Endothelial cell of umbilical vein (primary cell): ENCODE measurements at regions of chr12 and their contacts with region 1.

Region 1: DNA sequence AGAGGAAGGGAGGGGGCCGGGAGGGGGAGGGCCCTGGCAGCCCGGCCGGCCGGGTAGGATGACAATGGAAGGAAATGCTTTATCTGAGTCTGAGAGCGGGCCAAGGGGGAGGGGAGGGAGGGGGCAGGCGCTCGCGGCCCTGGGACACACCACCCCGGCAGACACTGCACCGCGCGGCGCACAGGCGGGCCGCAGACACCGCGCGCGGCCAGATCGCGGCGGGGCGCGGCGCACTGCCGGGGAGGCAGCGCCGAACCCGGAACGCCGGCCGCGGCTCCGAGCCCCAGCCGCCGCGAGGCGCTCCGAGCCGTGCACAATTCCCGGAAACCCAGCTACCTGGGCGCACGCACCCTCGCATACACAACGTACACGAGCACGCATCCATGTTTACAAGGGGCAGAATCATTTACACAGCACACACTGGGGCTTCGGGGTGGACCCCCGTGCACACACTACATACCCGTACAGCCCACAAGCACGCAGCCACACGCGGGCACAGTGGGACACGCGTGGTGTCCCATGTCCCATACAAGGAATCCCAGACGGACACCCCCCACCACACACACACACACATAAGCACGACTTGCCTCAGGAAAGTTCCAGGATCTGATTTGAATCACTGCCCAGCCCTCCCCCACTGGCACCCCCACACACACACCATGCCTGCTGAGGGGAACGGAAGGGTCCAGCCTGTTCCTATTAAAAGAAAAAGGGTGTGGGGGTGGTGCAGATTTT is at the start of gene HDAC7:
- DNase-seq: peak; percentile 90
- H3K4me3 ChIP-seq: peak within 1 kb of the TSS; percentile 79 to 85 (median 84)
- H3K27ac ChIP-seq: peak within 1 kb of the TSS; percentile 93
- H3K4me1 ChIP-seq: peaks cover 50% of the 10 kb centered on the region
- H3K27me3 ChIP-seq: no peaks in the 10 kb centered on the region
- CTCF ChIP-seq: no peak
- POLR2A ChIP-seq: peak; percentile 88
- total RNA-seq, gene HDAC7: 249 and 252 TPM in 2 replicates

Region 2: GRCh38 chr12:47578836-47579235 is 241.2 kb before region 1 on chr12:
- CTCF ChIA-PET with region 1: no interaction called
- POLR2A ChIA-PET with region 1: no interaction called
- dilution Hi-C with region 1: no loop called
- intact Hi-C with region 1: no loop called
- DNase-seq: no peak
- H3K4me3 ChIP-seq: no peak overlapping the region
- H3K27ac ChIP-seq: no peak overlapping the region
- H3K4me1 ChIP-seq: no peaks in the 10 kb centered on the region
- H3K27me3 ChIP-seq: peaks cover 0 to 1% of the 10 kb centered on the region in 2 experiments
- CTCF ChIP-seq: no peak
- POLR2A ChIP-seq: no peak

Region 3: DNA sequence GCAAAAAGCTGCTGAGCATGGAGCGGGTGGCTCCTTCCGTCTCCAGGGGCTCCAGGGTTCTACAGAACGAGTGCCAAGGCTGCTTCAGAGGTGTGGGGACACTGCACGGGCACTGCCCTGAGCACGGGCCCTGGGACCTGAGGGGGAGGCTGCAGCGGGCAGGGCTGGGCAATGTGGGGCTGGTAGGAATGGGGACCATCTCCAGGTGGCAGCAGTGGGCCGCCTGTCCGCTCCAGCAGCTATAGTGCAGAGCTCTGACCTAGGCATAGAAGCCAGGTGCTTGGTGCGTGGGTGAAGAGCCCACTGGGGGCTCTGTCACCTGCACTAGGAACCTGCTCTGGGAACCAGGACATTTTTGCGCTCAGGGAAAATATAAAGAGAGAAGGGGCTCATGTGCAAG is 22.6 kb before region 1 on chr12:
- CTCF ChIA-PET with region 1: interaction called, 35 read pairs
- POLR2A ChIA-PET with region 1: interaction called, 9 read pairs
- dilution Hi-C with region 1: no loop called
- intact Hi-C with region 1: loop called (anchors 1 kb)
- DNase-seq: no peak
- H3K4me3 ChIP-seq: no peak overlapping the region
- H3K27ac ChIP-seq: no peak overlapping the region
- H3K4me1 ChIP-seq: peaks cover 23% of the 10 kb centered on the region
- H3K27me3 ChIP-seq: no peaks in the 10 kb centered on the region
- CTCF ChIP-seq: peak; percentile 6 to 45
- POLR2A ChIP-seq: no peak

Region 4: GRCh38 chr12:47805417-47805816 is 14.6 kb before region 1 on chr12:
- CTCF ChIA-PET with region 1: interaction called, 35 read pairs
- POLR2A ChIA-PET with region 1: interaction called, 17 read pairs
- dilution Hi-C with region 1: no loop called
- intact Hi-C with region 1: loop called (anchors 1 kb)
- DNase-seq: no peak
- H3K4me3 ChIP-seq: no peak overlapping the region
- H3K27ac ChIP-seq: peak overlapping the region; percentile 11
- H3K4me1 ChIP-seq: peaks cover 88% of the 10 kb centered on the region
- H3K27me3 ChIP-seq: no peaks in the 10 kb centered on the region
- CTCF ChIP-seq: no peak
- POLR2A ChIP-seq: no peak

Region 5: DNA sequence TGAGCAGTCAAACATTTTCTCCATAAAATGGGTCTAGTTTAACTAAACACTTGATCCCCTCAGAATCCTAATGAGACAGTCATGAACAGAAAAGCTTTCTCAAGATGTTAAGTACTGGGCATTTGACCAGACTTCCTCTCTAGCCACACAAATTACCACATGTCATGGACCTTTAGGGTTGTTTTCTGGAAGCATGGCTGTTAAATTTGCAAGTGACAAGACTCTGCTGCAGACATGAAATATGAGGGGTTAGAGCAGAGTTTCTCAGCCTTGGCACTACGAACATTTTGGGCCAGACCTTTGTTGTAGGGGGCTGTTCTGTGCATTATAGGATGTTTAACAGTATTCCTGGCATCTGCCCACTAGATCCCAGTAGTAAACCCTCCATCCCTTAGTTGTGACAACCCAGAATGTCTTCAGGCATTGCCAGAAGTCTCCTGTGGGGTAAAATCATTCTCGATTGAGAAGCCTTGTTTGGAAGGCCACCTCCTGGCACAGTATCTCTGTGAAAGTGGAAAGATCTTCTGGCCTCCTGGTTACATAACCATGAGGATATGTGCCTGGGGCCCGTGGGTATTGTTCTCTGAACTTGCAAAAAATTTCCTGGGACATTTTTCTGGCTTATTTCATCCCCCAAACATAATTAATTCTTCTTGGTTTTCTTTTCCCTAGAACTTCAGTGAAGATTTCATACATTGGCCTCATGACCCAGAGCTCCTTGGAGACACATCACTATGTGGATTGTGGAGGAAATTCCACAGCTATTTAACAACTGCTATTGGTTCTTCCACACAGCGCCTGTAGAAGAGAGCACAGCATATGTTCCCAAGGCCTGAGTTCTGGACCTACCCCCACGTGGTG is 147.6 kb after region 1 on chr12:
- CTCF ChIA-PET with region 1: no interaction called
- POLR2A ChIA-PET with region 1: no interaction called
- dilution Hi-C with region 1: no loop called
- intact Hi-C with region 1: no loop called
- DNase-seq: no peak
- H3K4me3 ChIP-seq: no peak overlapping the region
- H3K27ac ChIP-seq: no peak overlapping the region
- H3K4me1 ChIP-seq: peaks cover 7% of the 10 kb centered on the region
- H3K27me3 ChIP-seq: no peaks in the 10 kb centered on the region
- CTCF ChIP-seq: no peak
- POLR2A ChIP-seq: no peak